H1 (cell line): ENCODE measurements at regions of chr11 and their contacts with region 1.

Region 1: DNA sequence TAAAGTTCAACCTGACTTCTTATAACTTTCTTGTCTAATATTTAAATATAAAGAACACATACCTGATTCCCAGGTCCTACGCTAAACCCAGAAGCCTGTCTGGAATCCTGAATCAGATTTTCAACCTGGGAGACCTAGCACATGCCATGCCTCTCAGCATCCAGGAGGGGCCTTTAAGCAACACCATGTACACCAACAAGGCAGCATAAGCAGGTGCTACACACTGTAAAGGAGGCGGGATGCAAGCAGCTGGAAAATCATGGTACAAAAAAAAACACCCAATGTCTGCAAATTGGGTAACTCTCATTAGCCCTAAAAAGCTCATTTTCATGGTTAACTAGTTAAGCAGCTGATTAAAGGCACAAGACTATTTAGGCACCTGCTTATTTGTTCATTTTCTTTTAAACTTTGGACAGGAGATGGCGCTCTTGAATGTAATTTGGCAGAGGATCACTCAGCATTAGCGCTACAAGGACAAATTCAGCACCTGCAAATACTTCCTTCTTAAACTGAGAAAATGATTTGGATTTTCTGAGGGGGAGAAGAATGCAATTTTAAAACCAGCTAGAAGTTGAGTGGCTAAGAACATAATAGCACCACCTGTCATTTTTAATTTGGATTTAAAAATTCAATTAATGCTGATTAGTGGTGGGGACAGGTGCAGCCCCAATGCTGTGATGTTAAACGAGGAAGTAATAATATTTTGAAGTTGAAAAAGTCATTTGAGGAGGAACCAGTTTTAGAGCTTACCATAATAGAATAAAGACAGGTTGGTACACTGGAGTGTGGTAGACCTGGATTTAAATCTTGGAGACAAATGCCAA is 104.0 kb downstream of the FAR1 start:
- DNase-seq: peak; percentile 31 to 55
- H3K4me3 ChIP-seq: no peak overlapping the region
- H3K27ac ChIP-seq: no peak overlapping the region
- H3K4me1 ChIP-seq: peaks cover 0 to 4% (median under 1%) of the 10 kb centered on the region in 4 experiments; a peak in 3 of 7 replicates
- H3K27me3 ChIP-seq: no peaks in the 10 kb centered on the region
- CTCF ChIP-seq: peak; percentile 1 to 68 (median 48)
- EP300 ChIP-seq: no peak
- POLR2A ChIP-seq: no peak
- RAD21 ChIP-seq: peak; percentile 85 to 88

Region 2: GRCh38 chr11:13761712-13762111 is 10.7 kb before region 1 on chr11:
- CTCF ChIA-PET with region 1: interaction called, 44 read pairs
- POLR2A ChIA-PET with region 1: no interaction called
- DNase-seq: no peak
- H3K4me3 ChIP-seq: no peak overlapping the region
- H3K27ac ChIP-seq: no peak overlapping the region
- H3K4me1 ChIP-seq: peaks cover 0 to 5% (median 0%) of the 10 kb centered on the region in 4 experiments; a peak in 2 of 7 replicates
- H3K27me3 ChIP-seq: no peaks in the 10 kb centered on the region
- CTCF ChIP-seq: no peak
- EP300 ChIP-seq: no peak
- POLR2A ChIP-seq: no peak
- RAD21 ChIP-seq: no peak

Region 3: DNA sequence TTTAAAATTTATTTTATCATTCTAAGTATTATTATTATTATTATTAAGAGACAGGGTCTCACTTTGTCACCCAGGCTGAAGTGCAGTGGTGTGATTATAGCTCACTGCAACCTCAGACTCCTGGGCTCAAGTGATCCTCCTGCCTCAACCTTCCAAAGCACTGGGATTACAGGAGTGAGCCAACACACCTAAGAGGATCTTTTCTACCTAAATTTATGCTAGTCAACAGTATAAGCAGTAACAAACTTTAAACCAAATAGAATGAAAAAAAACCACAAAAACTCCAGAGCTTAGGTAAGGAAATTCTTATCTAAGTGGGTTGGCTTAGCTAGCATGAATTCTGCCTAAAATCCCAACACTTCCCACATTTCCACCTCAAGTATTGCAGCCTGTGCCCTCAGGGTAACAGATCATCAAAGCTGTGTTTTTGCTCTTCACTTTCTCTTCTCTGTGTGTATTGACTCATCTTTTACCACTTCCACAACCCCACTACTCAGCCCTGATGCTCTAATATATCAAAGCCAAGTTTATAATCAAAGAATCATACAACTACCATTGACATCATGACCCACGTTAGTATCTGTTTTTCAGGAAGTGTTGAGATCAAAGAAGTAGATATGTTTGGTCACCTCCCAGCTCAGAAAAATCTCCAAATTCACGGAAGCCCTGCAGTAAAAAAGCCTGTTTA is 96.4 kb after region 1 on chr11:
- CTCF ChIA-PET with region 1: interaction called, 18 read pairs
- POLR2A ChIA-PET with region 1: no interaction called
- DNase-seq: no peak
- H3K4me3 ChIP-seq: no peak overlapping the region
- H3K27ac ChIP-seq: no peak overlapping the region
- H3K4me1 ChIP-seq: peaks cover 0 to 5% (median 1%) of the 10 kb centered on the region in 4 experiments; a peak in 3 of 7 replicates
- H3K27me3 ChIP-seq: no peaks in the 10 kb centered on the region; a peak in 1 of 7 replicates
- CTCF ChIP-seq: no peak
- EP300 ChIP-seq: no peak
- POLR2A ChIP-seq: no peak
- RAD21 ChIP-seq: no peak

Region 4: DNA sequence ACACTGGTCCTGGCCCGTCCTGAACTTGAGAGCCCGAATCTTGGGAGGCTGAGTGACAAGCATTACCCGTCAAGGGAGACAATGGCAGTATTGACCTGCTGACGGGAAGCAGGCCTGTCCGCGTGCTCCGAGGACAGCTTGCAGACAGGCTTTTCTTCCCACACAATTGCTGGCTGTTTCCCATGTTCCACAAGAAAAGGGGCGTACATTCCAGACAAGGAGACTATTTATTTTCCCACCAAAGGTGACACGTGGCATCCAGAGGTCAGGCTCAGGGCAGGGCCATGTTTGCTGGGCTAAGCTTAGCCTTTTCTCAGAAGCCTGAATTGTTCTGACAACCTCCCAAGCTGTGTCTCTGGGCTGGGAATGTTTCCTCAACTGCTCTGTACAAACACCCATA is 103.2 kb after region 1 on chr11:
- CTCF ChIA-PET with region 1: interaction called, 18 read pairs
- POLR2A ChIA-PET with region 1: no interaction called
- DNase-seq: no peak
- H3K4me3 ChIP-seq: no peak overlapping the region
- H3K27ac ChIP-seq: no peak overlapping the region
- H3K4me1 ChIP-seq: peaks cover 0 to 5% (median 1%) of the 10 kb centered on the region in 4 experiments; a peak in 3 of 7 replicates
- H3K27me3 ChIP-seq: no peaks in the 10 kb centered on the region; a peak in 1 of 7 replicates
- CTCF ChIP-seq: no peak
- EP300 ChIP-seq: no peak
- POLR2A ChIP-seq: no peak
- RAD21 ChIP-seq: no peak

Region 5: DNA sequence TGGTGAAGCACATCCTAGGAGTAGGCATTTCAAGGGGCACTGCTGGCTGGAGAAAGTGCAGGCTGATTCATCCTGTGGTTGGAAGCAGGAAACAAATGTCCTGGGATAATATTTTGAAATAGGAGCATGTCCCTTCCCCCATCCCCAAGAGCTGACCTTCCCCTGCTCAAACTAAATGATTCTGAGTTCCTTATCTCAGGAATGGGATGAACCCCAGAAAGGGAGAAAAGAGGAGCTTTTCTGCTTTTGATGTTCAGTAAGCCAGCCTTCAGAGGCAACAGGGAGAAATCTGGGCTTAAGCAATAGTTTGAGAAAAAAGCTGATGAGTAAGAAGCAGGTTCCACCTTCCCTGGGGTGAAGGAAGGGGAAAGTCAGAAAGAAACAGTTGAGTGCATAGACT is 170.5 kb after region 1 on chr11:
- CTCF ChIA-PET with region 1: interaction called, 19 read pairs
- POLR2A ChIA-PET with region 1: no interaction called
- DNase-seq: no peak
- H3K4me3 ChIP-seq: no peak overlapping the region
- H3K27ac ChIP-seq: no peak overlapping the region
- H3K4me1 ChIP-seq: no peaks in the 10 kb centered on the region
- H3K27me3 ChIP-seq: no peaks in the 10 kb centered on the region
- CTCF ChIP-seq: no peak
- EP300 ChIP-seq: no peak
- POLR2A ChIP-seq: no peak
- RAD21 ChIP-seq: no peak

Region 6: GRCh38 chr11:14237444-14237961 is 465.1 kb after region 1 on chr11:
- CTCF ChIA-PET with region 1: interaction called, 14 read pairs
- POLR2A ChIA-PET with region 1: no interaction called
- DNase-seq: no peak
- H3K4me3 ChIP-seq: no peak overlapping the region
- H3K27ac ChIP-seq: no peak overlapping the region
- H3K4me1 ChIP-seq: peaks cover 0 to under 1% (median 0%) of the 10 kb centered on the region in 4 experiments; a peak in 1 of 7 replicates
- H3K27me3 ChIP-seq: peaks cover 0 to 3% (median 0%) of the 10 kb centered on the region in 4 experiments; a peak in 1 of 7 replicates
- CTCF ChIP-seq: no peak
- EP300 ChIP-seq: no peak
- POLR2A ChIP-seq: no peak
- RAD21 ChIP-seq: no peak

Region 7: GRCh38 chr11:14249121-14249963 is 476.9 kb after region 1 on chr11:
- CTCF ChIA-PET with region 1: interaction called, 66 read pairs
- POLR2A ChIA-PET with region 1: no interaction called
- DNase-seq: peak in 1 of 2 experiments; percentile 80
- H3K4me3 ChIP-seq: no peak overlapping the region
- H3K27ac ChIP-seq: no peak overlapping the region
- H3K4me1 ChIP-seq: peaks cover 0 to 6% (median 5%) of the 10 kb centered on the region in 4 experiments; a peak in 4 of 7 replicates
- H3K27me3 ChIP-seq: no peaks in the 10 kb centered on the region
- CTCF ChIP-seq: peak; percentile 42 to 91 (median 88)
- EP300 ChIP-seq: no peak
- POLR2A ChIP-seq: no peak
- RAD21 ChIP-seq: peak; percentile 99 to 100